Activated T-helper 1 cell treated with anti-CD3 and anti-CD28 coated beads, Interleukin-12 subunit alpha, Interleukin-12 subunit beta, Interleukin-2, Interleukin-4 antibody, amounts not matched to agents 30 ng/mL and 10 ng/mL and 1 ng/mL, durations not matched to agents 14 hours and 24 hours and 36 hours (primary cell): ENCODE measurements at regions of chr19 and their contacts with region 1.

Region 1: DNA sequence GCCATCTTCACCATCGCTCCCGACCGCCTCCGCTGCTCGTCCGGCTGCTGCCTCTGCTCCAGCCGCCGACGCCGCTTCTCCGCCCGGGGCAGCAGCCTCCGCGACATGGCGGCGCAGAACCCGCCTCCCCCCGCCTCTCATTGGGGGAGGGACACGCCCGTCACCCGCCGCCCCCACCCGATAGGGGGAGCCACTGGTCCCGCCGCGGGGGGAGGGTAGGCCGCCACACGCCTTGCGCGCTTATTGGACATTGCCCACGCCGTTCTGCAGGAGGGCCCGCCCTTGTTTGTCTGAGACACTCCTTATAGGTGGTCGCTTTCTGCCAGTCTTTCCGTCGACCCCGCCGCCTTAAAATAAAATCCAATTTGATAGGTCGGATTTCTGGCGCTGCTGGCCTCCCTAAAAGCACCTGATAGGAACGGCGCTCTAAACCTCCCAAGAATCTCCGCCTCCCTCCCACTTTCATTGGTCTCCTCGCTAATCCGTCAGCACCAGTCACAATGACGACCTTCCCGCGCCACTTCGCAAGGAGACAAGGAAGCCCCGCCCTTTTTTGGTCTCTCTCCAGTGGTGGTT is at the start of gene HNRNPL:
- DNase-seq: peak; percentile 99
- H3K4me3 Mint-ChIP-seq: peak within 1 kb of the TSS; percentile 97
- H3K27ac Mint-ChIP-seq: peak within 1 kb of the TSS; percentile 99
- H3K4me1 Mint-ChIP-seq: peaks cover 50% of the 10 kb centered on the region
- H3K27me3 Mint-ChIP-seq: peaks cover 2% of the 10 kb centered on the region
- total RNA-seq, gene HNRNPL: 632 and 659 TPM in 2 replicates

Region 2: GRCh38 chr19:38374429-38375176 is 475.3 kb before region 1 on chr19 and contains the start of gene PSMD8:
- intact Hi-C with region 1: loop called (anchors 1 kb)
- DNase-seq: peak; percentile 98
- H3K4me3 Mint-ChIP-seq: peak within 1 kb of the TSS; percentile 100
- H3K27ac Mint-ChIP-seq: peak within 1 kb of the TSS; percentile 99
- H3K4me1 Mint-ChIP-seq: peaks cover 31% of the 10 kb centered on the region
- H3K27me3 Mint-ChIP-seq: peaks cover 3% of the 10 kb centered on the region
- total RNA-seq, gene PSMD8: 292 and 298 TPM in 2 replicates

Region 3: DNA sequence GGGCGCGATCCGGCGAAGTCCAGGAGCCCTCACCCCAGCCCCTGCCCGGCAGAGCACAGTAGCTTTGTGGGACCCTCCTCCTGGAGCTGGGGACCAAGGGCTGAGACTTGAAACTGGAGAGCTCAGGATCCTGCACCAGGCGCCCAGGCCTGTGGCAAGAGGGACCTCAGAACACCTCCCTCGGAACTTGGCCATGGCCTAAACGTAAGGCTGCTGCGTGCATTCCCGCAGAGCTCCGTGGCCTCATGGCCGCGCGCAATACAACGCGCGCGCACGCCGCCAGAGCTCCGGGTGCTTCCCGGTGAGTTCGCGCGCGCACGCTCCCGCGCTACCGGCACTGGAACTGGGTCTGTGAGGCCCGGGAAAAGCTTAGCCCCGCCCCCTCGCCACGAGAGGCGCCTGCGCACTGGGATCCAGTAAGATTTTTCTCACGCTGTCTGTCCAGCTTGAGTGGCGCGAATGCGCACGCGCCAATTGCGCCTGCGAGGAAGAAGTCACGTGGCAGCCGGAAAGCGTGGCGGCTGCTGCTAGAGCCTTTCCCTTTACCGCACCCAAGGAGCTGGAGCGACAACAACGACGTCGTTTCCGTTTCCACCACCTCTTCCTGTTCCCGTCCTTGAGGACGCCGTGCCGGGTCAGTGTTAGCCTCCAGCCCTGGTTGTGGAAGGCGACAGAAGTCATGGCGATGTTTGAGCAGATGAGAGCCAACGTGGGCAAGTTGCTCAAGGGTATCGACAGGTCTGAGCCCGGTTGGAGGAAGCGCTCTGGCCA is 231.2 kb before region 1 on chr19 and contains the start of gene EIF3K:
- intact Hi-C with region 1: loop called (anchors 1 kb)
- DNase-seq: peak; percentile 98
- H3K4me3 Mint-ChIP-seq: peak within 1 kb of the TSS; percentile 98
- H3K27ac Mint-ChIP-seq: peak within 1 kb of the TSS; percentile 84
- H3K4me1 Mint-ChIP-seq: peaks cover 32% of the 10 kb centered on the region
- H3K27me3 Mint-ChIP-seq: no peaks in the 10 kb centered on the region
- total RNA-seq, gene EIF3K: 309 and 326 TPM in 2 replicates

Region 4: DNA sequence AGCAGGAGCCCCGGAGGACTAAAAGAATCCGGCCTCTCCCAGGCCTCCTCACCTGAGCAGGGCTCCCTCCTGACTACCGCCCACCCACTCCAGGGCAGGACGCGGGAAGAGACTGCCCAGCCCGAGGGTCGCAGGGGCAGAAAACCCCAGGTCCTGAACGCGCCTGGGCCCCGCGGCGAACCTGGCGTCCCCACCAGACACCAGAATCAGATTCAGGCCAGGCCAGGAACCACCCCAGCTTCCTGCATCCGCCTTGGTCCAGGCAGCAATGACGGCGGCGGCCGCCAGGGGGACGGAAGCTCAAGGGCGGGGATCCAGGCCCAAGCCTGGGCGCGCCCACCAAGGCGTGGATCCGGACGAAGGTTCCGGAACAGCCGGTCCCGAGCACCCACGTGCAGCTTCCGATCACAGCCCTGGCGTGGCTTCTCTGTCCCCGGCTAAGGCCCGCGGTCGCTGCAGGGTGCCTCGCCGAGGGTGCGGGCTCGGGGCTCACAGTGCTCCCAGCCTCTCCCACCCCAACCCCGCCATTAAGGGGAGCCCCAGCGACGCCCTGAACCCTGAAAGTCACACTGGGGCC is 80.2 kb before region 1 on chr19:
- intact Hi-C with region 1: loop called (anchors 2 kb)
- DNase-seq: peak; percentile 87
- H3K4me3 Mint-ChIP-seq: peak overlapping the region; percentile 49
- H3K27ac Mint-ChIP-seq: peak overlapping the region; percentile 40
- H3K4me1 Mint-ChIP-seq: peaks cover 6% of the 10 kb centered on the region
- H3K27me3 Mint-ChIP-seq: peaks cover 2% of the 10 kb centered on the region

Region 5: GRCh38 chr19:38899447-38900219 is 49.7 kb after region 1 on chr19 and contains the starts of genes NFKBIB and SIRT2:
- intact Hi-C with region 1: loop called (anchors 1 kb)
- DNase-seq: peak; percentile 100
- H3K4me3 Mint-ChIP-seq: peak within 1 kb of the TSS; percentile 93
- H3K27ac Mint-ChIP-seq: peak within 1 kb of the TSS; percentile 94
- H3K4me1 Mint-ChIP-seq: peaks cover 42% of the 10 kb centered on the region
- H3K27me3 Mint-ChIP-seq: no peaks in the 10 kb centered on the region
- total RNA-seq, gene NFKBIB: 98.1 and 102 TPM in 2 replicates
- total RNA-seq, gene SIRT2: 28.3 and 28.7 TPM in 2 replicates